ENCODE measurements at regions of chr2 and their contacts with region 1.

Region 1: GRCh38 chr2:105797298-105797819 is 52.6 kb downstream of the NCK2 start:
- DNase-seq: peak; percentile 46
- ATAC-seq: no peak
- H3K4me3 ChIP-seq: peak overlapping the region; percentile 10 to 49 (median 16)
- H3K4me3 Mint-ChIP-seq: peak overlapping the region; percentile 75
- H3K27ac ChIP-seq: peak overlapping the region; percentile 86 to 92
- H3K27ac Mint-ChIP-seq: peak overlapping the region; percentile 94
- H3K4me1 ChIP-seq: peaks cover 91 to 94% of the 10 kb centered on the region in 2 donors
- H3K4me1 Mint-ChIP-seq: peaks cover 85% of the 10 kb centered on the region
- H3K27me3 ChIP-seq: no peaks in the 10 kb centered on the region
- H3K27me3 Mint-ChIP-seq: no peaks in the 10 kb centered on the region
- CTCF ChIP-seq: no peak

Region 2: DNA sequence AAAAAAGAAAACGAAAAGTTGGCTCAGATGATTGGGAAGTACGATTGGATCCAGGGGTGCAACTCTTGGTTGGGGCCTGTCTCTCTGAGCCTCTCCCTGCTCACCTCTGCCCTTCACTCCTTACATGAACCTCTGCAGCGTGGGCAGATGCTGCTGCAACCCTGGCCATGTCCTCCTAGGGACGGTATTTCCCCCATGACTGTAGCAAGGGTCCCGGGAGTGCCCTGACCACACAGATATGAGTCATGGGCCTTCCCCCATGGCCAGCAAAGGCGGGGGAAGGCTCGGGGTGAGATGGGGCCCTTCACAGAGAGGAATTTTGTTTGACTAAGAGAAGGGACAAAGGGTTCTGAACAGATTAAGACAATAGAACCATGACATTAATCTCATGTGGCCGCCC is 76.4 kb after region 1 on chr2:
- CTCF ChIA-PET with region 1: no interaction called
- POLR2A ChIA-PET with region 1: interaction called, 6 read pairs
- intact Hi-C with region 1: loop called (anchors 5 kb)
- DNase-seq: no peak
- ATAC-seq: peak; percentile 90
- H3K4me3 ChIP-seq: no peak overlapping the region
- H3K4me3 Mint-ChIP-seq: peak overlapping the region; percentile 64
- H3K27ac ChIP-seq: peak overlapping the region; percentile 0 to 59
- H3K27ac Mint-ChIP-seq: peak overlapping the region; percentile 83
- H3K4me1 ChIP-seq: peaks cover 31 to 35% of the 10 kb centered on the region in 2 donors
- H3K4me1 Mint-ChIP-seq: peaks cover 77% of the 10 kb centered on the region
- H3K27me3 ChIP-seq: no peaks in the 10 kb centered on the region
- H3K27me3 Mint-ChIP-seq: no peaks in the 10 kb centered on the region
- CTCF ChIP-seq: no peak

Measured in B cell (primary cell).